Ovary (tissue), 10 donors: ENCODE measurements at regions of chr11 and their contacts with region 1.

Region 1: GRCh38 chr11:68714060-68714856 is 29.9 kb downstream of the GAL start:
- DNase-seq: no peak
- H3K4me3 ChIP-seq: no peak overlapping the region
- H3K27ac ChIP-seq: no peak overlapping the region
- H3K4me1 ChIP-seq: no peaks in the 10 kb centered on the region
- H3K27me3 ChIP-seq: no peaks in the 10 kb centered on the region
- CTCF ChIP-seq: no peak
- EP300 ChIP-seq: no peak
- POLR2A ChIP-seq: no peak

Region 2: DNA sequence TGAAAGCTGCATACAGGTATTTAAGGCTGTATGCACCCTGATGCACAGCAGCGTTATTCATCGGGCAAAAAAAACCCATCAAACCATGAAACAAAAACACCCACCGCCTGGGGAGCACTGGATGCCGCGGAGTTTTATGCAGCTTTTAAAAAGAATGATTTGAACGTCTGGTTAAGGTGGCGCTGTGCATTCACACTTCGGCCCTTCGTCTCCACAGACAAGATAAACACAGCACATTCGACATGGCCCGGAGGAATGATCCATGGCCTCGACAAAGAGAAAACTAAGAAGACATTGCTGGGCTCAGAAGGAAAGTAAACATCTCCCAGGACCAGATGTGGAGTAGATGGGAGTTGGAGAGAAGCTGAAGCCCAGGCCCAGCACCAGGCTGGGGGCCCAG is 70.7 kb before region 1 on chr11:
- intact Hi-C with region 1: loop called in 1 of 4 experiments (anchors 10 kb)
- DNase-seq: no peak
- H3K4me3 ChIP-seq: no peak overlapping the region
- H3K27ac ChIP-seq: no peak overlapping the region
- H3K4me1 ChIP-seq: no peaks in the 10 kb centered on the region
- H3K27me3 ChIP-seq: no peaks in the 10 kb centered on the region
- CTCF ChIP-seq: no peak
- EP300 ChIP-seq: no peak
- POLR2A ChIP-seq: no peak